PC-3 (cell line): ENCODE measurements at regions of chr1 and their contacts with region 1.

Region 1: DNA sequence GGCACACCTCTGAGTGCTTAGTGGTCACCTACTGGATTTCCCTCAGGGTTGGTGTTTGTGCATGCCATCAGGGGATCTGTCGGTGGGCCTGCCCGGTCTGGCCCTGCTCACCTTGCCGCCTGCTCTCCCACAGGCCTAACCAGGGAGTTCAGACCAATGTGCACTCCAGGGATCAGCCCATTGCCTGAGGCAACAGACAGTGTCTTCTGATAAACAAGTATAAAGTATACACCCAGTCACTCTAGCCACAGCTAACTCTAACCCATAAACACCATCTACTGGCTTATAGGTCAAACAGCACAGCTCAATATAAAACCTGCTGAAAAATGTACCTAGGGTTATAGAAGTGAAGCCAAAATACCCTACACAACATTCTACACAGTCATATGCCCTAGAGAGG is 1300.0 kb downstream of the PLA2G4A start:
- DNase-seq: peak; percentile 59
- ATAC-seq: peak; percentile 87
- H3K4me3 ChIP-seq: no peak overlapping the region
- H3K27ac ChIP-seq: no peak overlapping the region
- H3K4me1 ChIP-seq: peaks cover 18% of the 10 kb centered on the region
- H3K27me3 ChIP-seq: no peaks in the 10 kb centered on the region
- CTCF ChIP-seq: peak; percentile 61

Region 2: DNA sequence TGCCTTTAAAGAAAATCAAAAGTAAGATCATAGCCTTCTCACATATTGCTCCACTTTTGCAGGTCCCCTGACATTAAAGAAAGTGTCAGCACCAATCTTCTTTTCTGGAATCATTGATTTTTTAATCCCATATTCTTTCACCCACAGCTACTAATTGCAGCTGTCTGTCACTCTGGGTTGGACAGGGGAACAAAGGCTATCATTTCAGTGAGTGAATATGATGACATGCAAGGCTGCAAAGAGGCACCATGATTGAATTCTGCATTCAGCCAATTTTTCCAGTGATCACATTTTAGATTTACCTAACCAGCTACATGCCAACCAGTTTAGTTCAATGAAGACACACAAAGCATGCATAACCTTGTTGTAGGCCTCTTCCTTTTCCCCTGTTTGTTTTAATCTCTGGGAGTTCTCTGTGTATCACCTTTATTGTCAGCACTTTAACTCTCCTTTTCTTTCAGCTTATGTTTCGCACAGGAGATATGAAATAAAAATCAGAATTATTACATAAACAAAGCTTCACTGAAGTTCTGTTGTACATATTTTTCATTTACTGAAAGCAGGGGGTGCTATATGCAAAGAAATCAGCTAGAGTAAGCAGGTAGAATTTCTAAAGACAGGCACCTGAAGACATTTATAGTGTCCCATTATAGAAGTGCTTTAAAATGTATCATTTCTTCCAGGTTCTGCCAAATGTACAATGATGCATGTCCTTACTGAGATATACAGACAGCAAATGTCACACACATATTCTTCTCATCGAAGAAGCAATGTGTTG is 715.2 kb before region 1 on chr1:
- CTCF ChIA-PET with region 1: no interaction called
- POLR2A ChIA-PET with region 1: no interaction called
- intact Hi-C with region 1: loop called (anchors 5 kb)
- DNase-seq: peak; percentile 29
- ATAC-seq: peak; percentile 48; the same call in 1 of the 2 replicates
- H3K4me3 ChIP-seq: no peak overlapping the region
- H3K27ac ChIP-seq: no peak overlapping the region
- H3K4me1 ChIP-seq: no peaks in the 10 kb centered on the region
- H3K27me3 ChIP-seq: no peaks in the 10 kb centered on the region
- CTCF ChIP-seq: peak; percentile 56

Region 3: GRCh38 chr1:187928288-187928687 is 200.5 kb before region 1 on chr1:
- CTCF ChIA-PET with region 1: no interaction called
- POLR2A ChIA-PET with region 1: no interaction called
- intact Hi-C with region 1: loop called (anchors 5 kb)
- DNase-seq: peak; percentile 26
- ATAC-seq: no peak
- H3K4me3 ChIP-seq: no peak overlapping the region
- H3K27ac ChIP-seq: no peak overlapping the region
- H3K4me1 ChIP-seq: no peaks in the 10 kb centered on the region
- H3K27me3 ChIP-seq: no peaks in the 10 kb centered on the region
- CTCF ChIP-seq: peak; percentile 39

Region 4: GRCh38 chr1:187999973-188000372 is 128.8 kb before region 1 on chr1:
- CTCF ChIA-PET with region 1: no interaction called
- POLR2A ChIA-PET with region 1: no interaction called
- intact Hi-C with region 1: loop called (anchors 2 kb)
- DNase-seq: peak; percentile 11
- ATAC-seq: peak; percentile 40; the same call in 1 of the 2 replicates
- H3K4me3 ChIP-seq: no peak overlapping the region
- H3K27ac ChIP-seq: no peak overlapping the region
- H3K4me1 ChIP-seq: no peaks in the 10 kb centered on the region
- H3K27me3 ChIP-seq: no peaks in the 10 kb centered on the region
- CTCF ChIP-seq: peak; percentile 39; the same call in 1 of the 2 replicates